ENCODE measurements at regions of chr6 and their contacts with region 1.

Region 1: DNA sequence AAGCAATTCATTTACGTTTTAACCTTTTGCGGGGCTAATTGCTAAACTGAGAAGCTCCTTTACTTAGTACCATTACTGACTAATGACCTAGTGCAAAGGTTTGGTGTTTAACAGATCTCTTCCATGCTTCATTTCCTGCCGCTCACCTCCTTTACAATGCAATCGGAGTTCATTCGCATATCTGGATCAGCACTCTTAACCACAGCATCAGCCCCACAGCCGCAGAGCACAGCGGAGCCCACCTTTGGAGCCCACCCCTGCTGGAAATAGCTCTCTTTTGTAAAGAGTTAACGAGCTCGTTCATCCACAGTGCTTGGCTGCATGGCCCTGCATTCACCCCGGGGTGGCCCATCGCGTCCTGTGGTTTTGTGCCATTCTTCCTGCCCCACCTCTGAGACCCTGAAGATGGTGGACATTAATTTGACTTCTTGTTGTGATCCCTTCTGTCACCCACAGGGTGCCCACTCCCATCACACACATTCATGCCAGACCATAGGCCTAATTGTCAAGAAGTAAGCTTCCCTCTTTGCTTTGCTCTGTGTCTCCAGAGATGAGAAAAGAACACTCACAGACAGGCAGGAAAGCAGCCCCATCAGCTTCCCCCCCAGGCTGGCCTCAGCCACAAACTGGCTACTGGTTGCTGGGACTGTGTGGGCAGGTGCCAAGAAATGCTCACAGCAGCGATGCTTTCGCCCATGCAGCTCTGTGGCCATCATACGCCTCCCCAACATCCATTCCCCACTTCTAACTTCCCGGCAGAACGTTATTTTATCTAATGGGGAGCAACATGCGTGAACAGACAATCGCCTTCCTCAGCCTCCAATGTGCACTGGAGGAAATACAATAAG is 167.1 kb downstream of the LRFN2 start:
- DNase-seq: no peak
- H3K4me3 ChIP-seq: no peak overlapping the region
- CTCF ChIP-seq: no peak

Region 2: GRCh38 chr6:39982720-39983119 is 437.4 kb before region 1 on chr6:
- in situ Hi-C with region 1: no loop called
- DNase-seq: no peak
- H3K4me3 ChIP-seq: no peak overlapping the region
- CTCF ChIP-seq: no peak

Region 3: GRCh38 chr6:40352006-40352405 is 68.1 kb before region 1 on chr6:
- in situ Hi-C with region 1: loop called (anchors 5 kb)
- DNase-seq: no peak
- H3K4me3 ChIP-seq: no peak overlapping the region
- CTCF ChIP-seq: no peak

Measured in astrocyte of the cerebellum (primary cell).